ENCODE measurements at regions of chr13 and their contacts with region 1.

Region 1: DNA sequence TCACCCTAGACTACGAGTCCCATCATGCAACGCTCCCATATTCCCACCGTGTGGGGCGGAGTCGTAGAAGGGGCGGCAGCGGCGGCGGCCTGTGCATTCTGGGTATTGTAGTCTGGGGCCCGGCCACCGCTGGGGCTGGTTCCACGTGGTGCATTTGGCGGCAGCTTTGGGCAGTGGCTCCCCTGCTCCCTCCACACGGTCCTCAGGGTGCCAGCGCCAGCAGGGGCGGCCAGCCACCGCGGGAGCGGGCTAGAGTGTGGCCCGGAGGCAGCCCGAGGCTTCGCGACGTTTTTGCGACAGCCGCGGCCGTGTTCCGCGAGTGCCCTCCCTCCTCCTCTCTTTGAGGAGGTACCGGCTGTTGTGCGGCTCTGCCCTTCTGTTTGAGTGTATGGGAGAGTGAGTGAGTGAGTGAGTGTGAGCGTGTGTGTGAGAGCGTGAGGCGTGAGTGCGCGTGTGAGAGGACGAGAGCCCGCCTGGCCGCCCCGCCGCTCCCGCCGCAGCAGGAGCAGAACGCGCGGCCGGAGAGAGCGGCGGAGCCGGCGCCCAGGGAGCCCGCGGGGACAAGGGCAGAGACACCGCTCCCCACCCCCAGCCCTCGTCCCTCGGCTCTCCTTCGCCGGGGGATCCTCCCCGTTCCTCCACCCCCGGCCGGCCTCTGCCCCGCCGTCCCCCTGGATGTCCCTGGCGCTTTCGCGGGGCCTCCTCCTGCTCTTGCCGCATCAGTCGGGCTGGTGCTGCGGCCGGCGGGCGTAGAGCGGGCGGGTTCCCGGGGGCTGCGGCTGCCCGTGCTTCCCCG is at the start of gene CDK8:
- DNase-seq: peak; percentile 94 to 97
- ATAC-seq: peak; percentile 98
- H3K4me3 ChIP-seq: peak within 1 kb of the TSS; percentile 93 to 97
- H3K27ac ChIP-seq: peak within 1 kb of the TSS; percentile 49 to 79
- H3K4me1 ChIP-seq: no peaks in the 10 kb centered on the region
- H3K27me3 ChIP-seq: no peaks in the 10 kb centered on the region
- total RNA-seq, gene CDK8: 10.5 to 10.6 TPM

Region 2: GRCh38 chr13:26221721-26222519 is 32.1 kb before region 1 on chr13 and contains the start of gene RNF6:
- intact Hi-C with region 1: loop called in 1 of 2 experiments (anchors 1 kb)
- DNase-seq: peak; percentile 96
- ATAC-seq: peak; percentile 100
- H3K4me3 ChIP-seq: peak within 1 kb of the TSS; percentile 83 to 96
- H3K27ac ChIP-seq: peak within 1 kb of the TSS; percentile 95
- H3K4me1 ChIP-seq: peaks cover 0 to 3% of the 10 kb centered on the region in 2 donors
- H3K27me3 ChIP-seq: no peaks in the 10 kb centered on the region
- total RNA-seq, gene RNF6: 23.2 to 28.9 TPM

Region 3: GRCh38 chr13:26498656-26499591 is 244.9 kb after region 1 on chr13:
- intact Hi-C with region 1: loop called in 1 of 2 experiments (anchors 10 kb)
- DNase-seq: no peak
- ATAC-seq: no peak
- H3K4me3 ChIP-seq: no peak overlapping the region
- H3K27ac ChIP-seq: no peak overlapping the region
- H3K4me1 ChIP-seq: no peaks in the 10 kb centered on the region
- H3K27me3 ChIP-seq: no peaks in the 10 kb centered on the region

Measured in aorta (tissue), 5 donors.